Activated CD4-positive, alpha-beta memory T cell treated with anti-CD3 and anti-CD28 coated beads for 36 hours (primary cell): ENCODE measurements at regions of chr2 and their contacts with region 1.

Region 1: DNA sequence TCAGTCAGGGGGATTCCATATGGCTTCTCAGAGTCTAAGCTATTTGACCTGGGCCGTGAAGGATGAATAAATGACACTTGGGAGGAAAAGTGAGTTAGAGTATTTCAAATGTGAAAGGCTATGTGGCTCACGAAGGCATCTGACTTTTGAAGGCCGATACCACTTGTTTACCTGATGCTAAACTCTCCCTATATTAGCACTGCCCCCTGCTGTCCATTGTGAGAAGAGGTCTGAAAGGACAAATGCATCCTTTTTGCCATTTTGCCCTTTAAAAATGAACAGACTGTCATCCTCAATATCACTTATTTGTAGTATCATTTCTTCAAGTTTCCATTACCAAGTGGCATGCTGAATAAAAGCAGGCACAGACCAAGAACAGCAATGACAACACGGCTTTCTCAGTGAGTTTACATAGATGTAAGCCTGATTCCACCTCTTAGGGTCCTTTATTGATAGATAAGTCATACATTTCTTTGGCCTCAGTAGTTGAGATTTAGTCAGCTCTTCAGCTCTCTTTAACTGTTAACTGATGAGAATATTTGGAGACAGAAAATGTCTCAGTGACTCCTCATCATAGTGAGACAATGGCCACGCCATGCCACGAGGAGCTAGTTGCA is 40.1 kb downstream of the DOCK10 start:
- DNase-seq: peak; percentile 65
- H3K4me3 Mint-ChIP-seq: no peak overlapping the region
- H3K27ac Mint-ChIP-seq: peak overlapping the region; percentile 74
- H3K4me1 Mint-ChIP-seq: peaks cover 82% of the 10 kb centered on the region
- H3K27me3 Mint-ChIP-seq: no peaks in the 10 kb centered on the region

Region 2: DNA sequence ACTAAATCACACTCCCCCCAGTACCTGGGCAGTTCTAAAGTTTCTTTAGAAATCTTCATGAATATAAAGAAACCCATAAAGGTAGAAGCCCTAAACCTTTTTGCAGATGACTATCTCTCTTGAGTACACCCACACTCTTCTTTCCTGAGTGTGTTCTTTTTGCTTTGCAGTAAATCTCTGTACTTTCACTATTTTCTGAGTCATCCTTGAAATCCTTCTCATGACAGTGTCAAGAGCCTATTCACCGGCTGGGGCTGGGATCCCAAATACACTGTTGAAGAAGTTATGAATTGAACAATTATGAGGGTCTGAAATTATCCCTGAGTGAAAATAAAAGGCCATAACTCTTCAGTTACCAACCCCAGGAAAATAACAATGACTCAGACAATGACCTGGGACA is 152.1 kb before region 1 on chr2:
- CTCF ChIA-PET with region 1: interaction called, 6 read pairs
- POLR2A ChIA-PET with region 1: no interaction called
- intact Hi-C with region 1: loop called (anchors 2 kb)
- DNase-seq: no peak
- H3K4me3 Mint-ChIP-seq: no peak overlapping the region
- H3K27ac Mint-ChIP-seq: no peak overlapping the region
- H3K4me1 Mint-ChIP-seq: peaks cover 19% of the 10 kb centered on the region
- H3K27me3 Mint-ChIP-seq: no peaks in the 10 kb centered on the region

Region 3: GRCh38 chr2:224903621-224904020 is 98.5 kb before region 1 on chr2:
- CTCF ChIA-PET with region 1: no interaction called
- POLR2A ChIA-PET with region 1: no interaction called
- intact Hi-C with region 1: no loop called
- DNase-seq: no peak
- H3K4me3 Mint-ChIP-seq: no peak overlapping the region
- H3K27ac Mint-ChIP-seq: peak overlapping the region; percentile 49
- H3K4me1 Mint-ChIP-seq: peaks cover 48% of the 10 kb centered on the region
- H3K27me3 Mint-ChIP-seq: no peaks in the 10 kb centered on the region

Region 4: GRCh38 chr2:224938651-224939182 is 63.4 kb before region 1 on chr2:
- CTCF ChIA-PET with region 1: interaction called, 43 read pairs
- POLR2A ChIA-PET with region 1: interaction called, 3 read pairs
- intact Hi-C with region 1: no loop called
- DNase-seq: peak; percentile 56
- H3K4me3 Mint-ChIP-seq: peak overlapping the region; percentile 67
- H3K27ac Mint-ChIP-seq: peak overlapping the region; percentile 79
- H3K4me1 Mint-ChIP-seq: peaks cover 80% of the 10 kb centered on the region
- H3K27me3 Mint-ChIP-seq: no peaks in the 10 kb centered on the region

Region 5: DNA sequence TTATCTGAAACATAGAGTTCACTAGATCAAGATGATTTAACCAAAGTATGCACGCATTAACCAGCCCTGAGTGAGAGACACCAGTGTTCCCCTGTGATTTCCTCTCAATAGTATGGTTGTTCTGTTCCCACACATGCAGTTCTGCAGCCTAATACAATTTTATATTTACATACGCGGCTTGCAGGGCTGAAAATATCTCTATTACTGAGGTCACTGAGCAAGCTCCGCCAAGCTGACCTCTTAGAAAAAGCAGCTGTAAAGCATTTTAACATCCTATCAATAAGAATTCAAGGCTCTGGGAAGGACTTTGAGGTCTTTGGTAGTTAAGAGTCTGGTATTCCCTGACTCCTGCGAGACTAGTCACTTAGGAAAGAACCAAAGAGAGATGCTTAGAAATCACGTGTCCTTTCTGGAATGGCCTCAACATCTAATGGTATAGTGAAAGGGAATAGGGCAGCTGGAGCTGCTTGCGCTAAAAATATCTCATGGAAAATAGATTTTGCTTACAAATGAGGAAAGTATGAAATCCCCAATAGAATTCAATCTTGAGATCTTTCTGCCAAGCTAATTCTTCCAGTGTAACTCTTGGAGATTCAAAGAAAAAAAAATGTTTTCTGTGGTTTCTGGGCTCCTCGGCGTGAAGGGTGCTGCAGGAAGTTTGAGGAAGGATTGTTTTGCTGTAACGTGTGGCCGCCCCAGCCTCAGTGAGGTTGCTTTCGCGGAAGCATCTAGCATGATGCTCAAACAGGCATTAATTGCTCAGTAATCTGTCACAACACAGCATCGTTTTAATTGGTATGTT is 19.0 kb before region 1 on chr2:
- CTCF ChIA-PET with region 1: interaction called, 30 read pairs
- POLR2A ChIA-PET with region 1: interaction called, 3 read pairs
- intact Hi-C with region 1: loop called (anchors 1 kb)
- DNase-seq: peak; percentile 58
- H3K4me3 Mint-ChIP-seq: peak overlapping the region; percentile 58
- H3K27ac Mint-ChIP-seq: peak overlapping the region; percentile 71
- H3K4me1 Mint-ChIP-seq: peaks cover 71% of the 10 kb centered on the region
- H3K27me3 Mint-ChIP-seq: no peaks in the 10 kb centered on the region

Region 6: DNA sequence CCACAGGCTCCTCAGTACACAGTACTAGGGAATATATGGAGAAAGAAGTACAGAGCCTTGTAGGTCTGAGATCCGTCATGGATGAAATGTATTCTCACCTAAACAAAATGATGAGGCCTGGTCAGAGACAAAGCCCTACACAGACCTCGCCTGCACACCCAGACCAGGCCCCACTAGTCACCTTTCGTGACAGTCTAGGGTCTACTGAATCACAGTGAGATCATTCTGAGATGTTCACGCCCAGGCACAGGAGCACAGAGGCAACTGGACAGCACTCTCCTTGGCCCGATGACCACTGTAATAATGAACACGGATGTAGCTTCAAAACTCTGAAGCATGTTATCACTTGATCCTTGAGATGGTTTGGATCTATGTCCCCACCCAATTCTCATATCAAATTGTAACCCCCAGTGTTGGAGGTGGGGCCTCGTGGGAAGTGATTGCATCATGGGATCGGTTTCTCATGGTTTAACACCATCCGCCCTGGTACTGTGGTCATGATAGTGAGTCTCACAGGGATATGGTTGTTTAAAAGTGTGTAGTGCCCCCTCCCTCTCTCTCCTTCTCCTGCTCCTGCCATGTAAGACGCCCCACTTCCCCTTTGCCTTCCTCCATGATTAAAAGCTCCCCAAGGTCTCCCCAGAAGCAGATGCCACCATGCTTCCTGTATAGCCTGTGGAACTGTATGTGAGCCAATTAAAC is 25.1 kb after region 1 on chr2:
- CTCF ChIA-PET with region 1: no interaction called
- POLR2A ChIA-PET with region 1: no interaction called
- intact Hi-C with region 1: no loop called
- DNase-seq: peak; percentile 56
- H3K4me3 Mint-ChIP-seq: no peak overlapping the region
- H3K27ac Mint-ChIP-seq: peak overlapping the region; percentile 76
- H3K4me1 Mint-ChIP-seq: peaks cover 79% of the 10 kb centered on the region
- H3K27me3 Mint-ChIP-seq: no peaks in the 10 kb centered on the region

Region 7: DNA sequence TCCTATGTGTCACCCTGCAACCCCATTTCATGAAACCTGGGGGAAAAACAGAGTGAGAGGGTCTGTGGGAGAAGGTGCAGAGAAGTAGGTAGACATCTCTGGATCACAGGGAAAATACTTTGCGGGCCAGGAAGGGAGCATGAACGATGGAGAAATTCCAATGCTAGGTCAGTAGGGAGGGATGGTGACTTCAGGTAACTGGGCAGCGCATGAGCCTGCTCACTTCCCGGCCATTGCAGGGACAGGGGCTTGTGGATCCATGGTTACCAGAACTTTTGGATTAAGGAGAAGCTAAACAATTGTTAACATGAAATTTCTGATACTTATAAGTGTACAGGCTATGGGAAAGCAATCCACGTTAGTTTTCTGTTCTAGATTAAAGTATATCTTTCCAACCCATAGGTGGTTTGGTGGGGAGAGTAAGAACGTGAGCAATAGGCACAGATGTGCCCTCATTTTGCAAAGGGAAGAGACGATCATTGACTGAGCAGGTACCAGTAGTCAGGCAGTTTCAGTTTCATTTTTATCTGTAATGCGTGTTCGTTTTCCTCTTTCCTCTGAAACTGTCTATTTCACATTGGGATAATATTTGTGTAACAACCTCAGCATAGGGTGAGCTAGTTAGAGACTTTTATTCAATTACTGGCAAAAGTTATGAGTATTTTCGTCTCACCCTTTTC is 462.3 kb after region 1 on chr2:
- CTCF ChIA-PET with region 1: no interaction called
- POLR2A ChIA-PET with region 1: no interaction called
- intact Hi-C with region 1: loop called (anchors 10 kb)
- DNase-seq: no peak
- H3K4me3 Mint-ChIP-seq: peak overlapping the region; percentile 42
- H3K27ac Mint-ChIP-seq: no peak overlapping the region
- H3K4me1 Mint-ChIP-seq: peaks cover 16% of the 10 kb centered on the region
- H3K27me3 Mint-ChIP-seq: peaks cover 4% of the 10 kb centered on the region